PC-3 (cell line): ENCODE measurements at regions of chr7 and their contacts with region 1.

Region 1: DNA sequence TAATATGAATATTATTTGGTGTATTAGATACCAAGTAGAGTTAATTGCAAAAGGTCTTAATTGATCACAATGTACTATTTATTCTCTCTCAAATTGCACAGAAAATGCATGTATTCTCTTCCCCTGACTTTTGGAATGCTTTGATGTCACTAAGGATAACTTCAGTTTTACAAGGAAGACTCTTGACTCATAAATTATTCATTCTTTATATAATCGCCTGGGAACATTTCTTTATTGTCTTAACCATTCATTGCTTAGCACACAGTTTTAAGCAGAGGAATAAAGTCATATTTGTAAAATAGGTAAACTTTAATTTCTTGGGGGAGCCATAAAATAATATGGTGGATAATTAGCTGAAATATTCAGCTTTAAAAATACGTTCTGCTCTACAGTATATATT is 306.0 kb upstream of the TMEM229A start:
- DNase-seq: peak; percentile 73
- ATAC-seq: peak; percentile 96
- H3K4me3 ChIP-seq: no peak overlapping the region
- H3K27ac ChIP-seq: peak overlapping the region; percentile 72
- H3K4me1 ChIP-seq: peaks cover 16% of the 10 kb centered on the region
- H3K27me3 ChIP-seq: no peaks in the 10 kb centered on the region
- CTCF ChIP-seq: no peak

Region 2: GRCh38 chr7:124051681-124052377 is 287.0 kb before region 1 on chr7:
- CTCF ChIA-PET with region 1: no interaction called
- POLR2A ChIA-PET with region 1: no interaction called
- intact Hi-C with region 1: no loop called
- DNase-seq: no peak
- ATAC-seq: peak; percentile 50
- H3K4me3 ChIP-seq: no peak overlapping the region
- H3K27ac ChIP-seq: no peak overlapping the region
- H3K4me1 ChIP-seq: no peaks in the 10 kb centered on the region
- H3K27me3 ChIP-seq: peaks cover 17% of the 10 kb centered on the region
- CTCF ChIP-seq: no peak

Region 3: GRCh38 chr7:124364283-124364682 is 25.4 kb after region 1 on chr7:
- CTCF ChIA-PET with region 1: no interaction called
- POLR2A ChIA-PET with region 1: no interaction called
- intact Hi-C with region 1: loop called (anchors 2 kb)
- DNase-seq: no peak
- ATAC-seq: no peak
- H3K4me3 ChIP-seq: no peak overlapping the region
- H3K27ac ChIP-seq: no peak overlapping the region
- H3K4me1 ChIP-seq: no peaks in the 10 kb centered on the region
- H3K27me3 ChIP-seq: no peaks in the 10 kb centered on the region
- CTCF ChIP-seq: no peak